ENCODE measurements at regions of chr17 and their contacts with region 1.

Region 1: GRCh38 chr17:61402978-61403800 is 3.5 kb downstream of the TBX2 start:
- DNase-seq: no peak
- ATAC-seq: peak; percentile 17
- H3K4me3 ChIP-seq: peak overlapping the region; percentile 37
- H3K4me3 Mint-ChIP-seq: peak overlapping the region; percentile 42 to 83 (median 74)
- H3K27ac ChIP-seq: no peak overlapping the region
- H3K27ac Mint-ChIP-seq: peak overlapping the region in 2 of 9 donors; percentile 25 to 67
- H3K4me1 ChIP-seq: peaks cover 17 to 34% of the 10 kb centered on the region in 2 donors
- H3K4me1 Mint-ChIP-seq: peaks cover 24 to 51% (median 44%) of the 10 kb centered on the region in 7 donors
- H3K27me3 ChIP-seq: peaks cover 0 to 56% of the 10 kb centered on the region in 2 donors
- H3K27me3 Mint-ChIP-seq: peaks cover 61 to 75% (median 63%) of the 10 kb centered on the region in 5 donors

Region 2: GRCh38 chr17:61323909-61324868 is 79.0 kb before region 1 on chr17:
- CTCF ChIA-PET with region 1: no interaction called
- POLR2A ChIA-PET with region 1: no interaction called
- intact Hi-C with region 1: no loop called
- DNase-seq: no peak
- ATAC-seq: no peak
- H3K4me3 ChIP-seq: no peak overlapping the region
- H3K4me3 Mint-ChIP-seq: no peak overlapping the region
- H3K27ac ChIP-seq: no peak overlapping the region
- H3K27ac Mint-ChIP-seq: no peak overlapping the region
- H3K4me1 ChIP-seq: no peaks in the 10 kb centered on the region
- H3K4me1 Mint-ChIP-seq: no peaks in the 10 kb centered on the region
- H3K27me3 ChIP-seq: no peaks in the 10 kb centered on the region
- H3K27me3 Mint-ChIP-seq: peaks cover 0 to 7% (median 0%) of the 10 kb centered on the region in 5 donors

Region 3: GRCh38 chr17:61383689-61384201 is 19.4 kb before region 1 on chr17:
- CTCF ChIA-PET with region 1: no interaction called
- POLR2A ChIA-PET with region 1: no interaction called
- intact Hi-C with region 1: no loop called
- DNase-seq: no peak
- ATAC-seq: no peak
- H3K4me3 ChIP-seq: no peak overlapping the region
- H3K4me3 Mint-ChIP-seq: no peak overlapping the region
- H3K27ac ChIP-seq: no peak overlapping the region
- H3K27ac Mint-ChIP-seq: no peak overlapping the region
- H3K4me1 ChIP-seq: no peaks in the 10 kb centered on the region
- H3K4me1 Mint-ChIP-seq: no peaks in the 10 kb centered on the region
- H3K27me3 ChIP-seq: no peaks in the 10 kb centered on the region
- H3K27me3 Mint-ChIP-seq: peaks cover 0 to 2% (median 0%) of the 10 kb centered on the region in 5 donors

Region 4: GRCh38 chr17:61451538-61452300 is 48.5 kb after region 1 on chr17:
- CTCF ChIA-PET with region 1: no interaction called
- POLR2A ChIA-PET with region 1: no interaction called
- intact Hi-C with region 1: loop called in 1 of 2 experiments (anchors 2 kb)
- DNase-seq: no peak
- ATAC-seq: peak; percentile 18
- H3K4me3 ChIP-seq: no peak overlapping the region
- H3K4me3 Mint-ChIP-seq: peak overlapping the region in 4 of 10 donors; percentile 37 to 84 (median 70)
- H3K27ac ChIP-seq: no peak overlapping the region
- H3K27ac Mint-ChIP-seq: no peak overlapping the region
- H3K4me1 ChIP-seq: peaks cover 0 to 6% of the 10 kb centered on the region in 2 donors
- H3K4me1 Mint-ChIP-seq: peaks cover 10 to 32% (median 27%) of the 10 kb centered on the region in 7 donors
- H3K27me3 ChIP-seq: peaks cover 6 to 7% of the 10 kb centered on the region in 2 donors
- H3K27me3 Mint-ChIP-seq: peaks cover 58 to 76% (median 64%) of the 10 kb centered on the region in 5 donors

Measured in naive thymus-derived CD4-positive, alpha-beta T cell (primary cell).